Activated CD4-positive, alpha-beta T cell treated with anti-CD3 and anti-CD28 coated beads for 36 hours (primary cell): ENCODE measurements at regions of chr9 and their contacts with region 1.

Region 1: GRCh38 chr9:136245219-136246150 is at the start of gene QSOX2:
- DNase-seq: peak; percentile 94
- ATAC-seq: peak; percentile 61
- H3K4me3 Mint-ChIP-seq: peak within 1 kb of the TSS; percentile 85
- H3K27ac Mint-ChIP-seq: peak within 1 kb of the TSS; percentile 95
- H3K4me1 Mint-ChIP-seq: peaks cover 28% of the 10 kb centered on the region
- H3K27me3 Mint-ChIP-seq: no peaks in the 10 kb centered on the region
- total RNA-seq, gene QSOX2: 18.1 to 21.2 TPM

Region 2: DNA sequence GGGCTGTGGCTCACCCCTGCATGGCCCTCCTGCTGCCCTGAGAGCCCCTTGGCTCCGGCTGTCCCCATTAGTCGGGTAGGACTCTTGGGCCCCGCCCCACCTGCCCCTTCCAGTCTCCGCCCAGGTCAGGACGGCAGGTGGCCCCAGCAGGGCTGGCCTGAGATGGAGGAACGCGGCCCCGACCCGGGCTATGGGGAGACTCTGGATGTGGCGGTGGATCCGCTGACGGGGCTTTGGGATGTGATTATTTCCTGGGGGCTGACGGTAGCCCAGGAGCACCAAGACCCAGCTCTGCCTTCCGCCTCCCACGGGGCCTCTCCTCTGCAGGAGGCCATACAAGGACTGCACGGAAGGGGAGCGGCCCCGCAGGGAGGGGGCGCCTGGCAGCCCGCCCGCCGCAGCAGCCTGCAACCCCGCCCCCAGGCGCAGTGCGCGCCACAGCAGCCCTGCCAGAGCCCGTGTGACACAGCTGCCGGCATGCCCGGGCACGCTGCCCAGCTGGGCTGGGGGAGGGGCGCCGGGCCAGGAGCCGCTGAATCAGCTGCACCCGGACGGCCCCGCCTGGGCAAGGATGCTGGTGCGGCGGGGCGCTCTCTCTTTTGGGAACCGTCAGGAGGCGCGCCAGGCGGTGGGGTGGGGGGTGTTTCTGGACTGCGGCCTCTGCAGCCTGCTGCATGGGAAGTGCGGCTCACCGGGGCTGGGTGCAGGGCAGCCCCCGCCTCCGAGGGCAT is 136.0 kb before region 1 on chr9:
- CTCF ChIA-PET with region 1: no interaction called
- POLR2A ChIA-PET with region 1: no interaction called
- intact Hi-C with region 1: loop called in 1 of 2 experiments (anchors 1 kb)
- DNase-seq: peak; percentile 97
- ATAC-seq: peak; percentile 88
- H3K4me3 Mint-ChIP-seq: peak overlapping the region; percentile 78
- H3K27ac Mint-ChIP-seq: peak overlapping the region; percentile 97
- H3K4me1 Mint-ChIP-seq: peaks cover 71% of the 10 kb centered on the region
- H3K27me3 Mint-ChIP-seq: no peaks in the 10 kb centered on the region

Region 3: DNA sequence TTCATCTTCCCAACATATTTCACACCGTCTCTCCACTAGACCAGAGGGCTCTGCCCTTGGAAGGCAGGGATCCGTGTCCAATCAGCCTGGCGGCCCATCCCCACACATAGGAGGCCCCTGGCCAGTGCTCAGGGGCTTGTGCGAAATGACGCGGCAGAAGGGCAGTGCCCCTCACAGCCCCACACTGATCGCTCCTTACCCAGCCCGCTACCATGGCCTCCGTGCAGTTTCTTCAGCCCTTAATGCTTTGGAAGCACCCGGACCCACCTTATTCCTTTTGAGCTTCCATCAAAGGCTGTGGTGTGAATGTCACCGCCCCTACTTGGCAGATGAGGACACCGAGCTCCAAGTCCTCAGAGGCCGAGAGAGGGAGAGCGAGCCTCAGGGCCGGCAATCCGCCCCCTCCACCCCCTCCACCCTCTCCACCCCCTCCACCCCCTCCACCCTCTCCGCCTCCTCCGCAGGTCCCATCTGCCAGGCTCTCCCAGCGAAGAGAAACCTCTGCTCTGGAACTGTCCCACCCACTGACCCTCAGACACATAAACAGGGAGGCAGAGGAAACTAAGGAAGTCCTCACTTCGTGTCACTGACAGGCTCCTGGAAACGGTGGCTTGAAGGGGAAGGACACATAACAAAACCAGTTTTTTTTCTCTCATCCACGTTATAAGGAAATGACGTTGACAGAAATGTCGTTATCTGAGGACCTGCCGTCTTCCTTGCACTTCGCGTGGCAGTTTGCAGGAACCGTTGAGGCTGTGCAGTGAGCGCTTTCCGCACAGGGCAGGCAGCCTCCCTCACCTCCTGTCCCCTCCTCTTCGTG is 13.8 kb before region 1 on chr9:
- CTCF ChIA-PET with region 1: interaction called, 3 read pairs
- POLR2A ChIA-PET with region 1: no interaction called
- intact Hi-C with region 1: loop called (anchors 1 kb)
- DNase-seq: peak; percentile 66
- ATAC-seq: peak; percentile 81
- H3K4me3 Mint-ChIP-seq: peak overlapping the region; percentile 48
- H3K27ac Mint-ChIP-seq: peak overlapping the region; percentile 84
- H3K4me1 Mint-ChIP-seq: peaks cover 42% of the 10 kb centered on the region
- H3K27me3 Mint-ChIP-seq: no peaks in the 10 kb centered on the region

Region 4: DNA sequence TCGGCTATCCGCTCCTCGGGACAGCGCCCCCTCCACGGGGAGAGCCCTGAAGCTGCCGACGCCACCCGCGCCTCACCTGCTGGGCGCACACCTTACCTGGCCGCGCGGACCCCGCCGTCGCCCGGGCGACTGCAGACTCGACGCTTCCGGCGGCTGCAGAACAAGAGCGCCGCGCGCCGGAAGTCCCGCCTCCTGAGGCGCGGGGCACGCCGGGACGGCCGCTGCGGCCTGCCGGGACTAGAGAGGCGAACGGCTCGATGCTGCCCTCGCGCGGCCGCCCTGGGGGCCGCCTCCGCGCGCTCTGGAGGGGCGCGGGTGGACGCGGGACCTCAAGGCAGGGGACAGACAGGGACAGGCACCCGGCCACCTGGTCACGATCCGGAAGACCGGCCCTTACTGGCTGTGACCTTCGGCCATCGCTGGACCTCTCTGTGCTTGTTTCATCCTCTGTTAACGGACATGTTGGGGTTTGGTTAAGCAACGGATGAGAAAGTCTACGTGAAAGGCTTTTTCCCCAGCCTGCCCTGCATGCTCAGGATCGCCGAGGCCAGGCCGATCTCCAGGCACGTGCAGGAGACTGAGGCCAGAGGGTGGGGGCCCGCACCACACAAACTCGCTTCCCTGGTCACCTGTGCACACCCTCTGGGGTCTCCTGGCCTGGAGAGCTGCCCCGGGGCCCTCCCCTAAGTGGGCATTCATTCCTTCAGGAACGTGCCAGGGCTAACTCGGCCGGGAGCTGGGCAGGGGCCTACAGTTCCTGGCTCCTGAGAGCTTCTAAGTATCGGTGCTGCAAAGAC is 154.8 kb after region 1 on chr9 and contains the start of gene SNAPC4:
- CTCF ChIA-PET with region 1: interaction called, 3 read pairs
- POLR2A ChIA-PET with region 1: no interaction called
- intact Hi-C with region 1: loop called in 1 of 2 experiments (anchors 1 kb)
- DNase-seq: peak; percentile 93
- ATAC-seq: peak; percentile 68
- H3K4me3 Mint-ChIP-seq: peak within 1 kb of the TSS; percentile 86
- H3K27ac Mint-ChIP-seq: peak within 1 kb of the TSS; percentile 80
- H3K4me1 Mint-ChIP-seq: peaks cover 50% of the 10 kb centered on the region
- H3K27me3 Mint-ChIP-seq: no peaks in the 10 kb centered on the region
- total RNA-seq, gene SNAPC4: 12.4 to 16.8 TPM

Region 5: DNA sequence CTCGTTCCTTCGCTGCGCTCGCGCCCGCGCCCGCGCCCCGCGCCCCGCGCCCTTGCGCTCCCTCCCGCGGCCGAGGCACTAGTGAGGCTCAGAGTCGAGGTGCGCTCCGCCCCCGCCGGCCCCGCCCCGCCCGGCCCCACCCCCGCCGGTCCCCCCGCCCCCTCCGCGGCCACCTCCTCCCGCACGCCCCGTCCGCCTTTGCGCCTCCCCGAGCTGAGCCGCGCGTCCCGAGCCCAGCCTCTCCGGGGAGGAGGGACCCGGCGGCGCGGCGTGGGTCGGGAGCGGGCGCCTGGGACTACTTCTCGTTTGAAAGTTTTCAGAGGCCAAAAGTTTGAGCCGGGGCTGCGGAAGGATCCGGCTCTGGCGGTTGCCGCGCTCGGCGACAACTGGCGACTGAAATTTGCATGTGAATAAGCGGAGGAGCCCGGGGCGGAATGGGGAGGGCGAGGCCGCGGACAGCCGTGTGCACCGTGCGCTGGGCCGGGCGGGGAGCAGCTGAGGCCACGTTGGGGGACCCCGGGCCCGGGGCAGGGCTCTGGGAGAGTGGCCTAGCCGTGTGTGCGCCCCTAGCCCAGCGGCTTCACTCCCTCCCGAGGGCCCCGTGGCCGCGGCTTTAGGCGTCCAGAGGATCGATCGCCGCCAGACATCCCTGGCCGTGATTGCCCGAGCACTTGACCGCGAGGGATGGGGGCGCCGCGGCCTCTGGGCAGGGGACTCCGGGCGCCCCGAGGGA is 300.6 kb after region 1 on chr9 and contains the start of gene NOTCH1:
- CTCF ChIA-PET with region 1: no interaction called
- POLR2A ChIA-PET with region 1: no interaction called
- intact Hi-C with region 1: loop called in 1 of 2 experiments (anchors 2 kb)
- DNase-seq: peak; percentile 95
- ATAC-seq: peak; percentile 75
- H3K4me3 Mint-ChIP-seq: peak within 1 kb of the TSS; percentile 92
- H3K27ac Mint-ChIP-seq: peak within 1 kb of the TSS; percentile 88
- H3K4me1 Mint-ChIP-seq: peaks cover 34% of the 10 kb centered on the region
- H3K27me3 Mint-ChIP-seq: no peaks in the 10 kb centered on the region
- total RNA-seq, gene NOTCH1: 70.0 to 79.4 TPM